ENCODE measurements at regions of chr5 and their contacts with region 1.

Region 1: GRCh38 chr5:42057254-42057690 is 132.2 kb downstream of the FBXO4 start:
- DNase-seq: no peak
- H3K4me3 ChIP-seq: no peak overlapping the region
- H3K27ac ChIP-seq: no peak overlapping the region
- H3K4me1 ChIP-seq: no peaks in the 10 kb centered on the region
- H3K27me3 ChIP-seq: no peaks in the 10 kb centered on the region
- CTCF ChIP-seq: peak; percentile 61 to 82 (median 64)
- POLR2A ChIP-seq: no peak

Region 2: DNA sequence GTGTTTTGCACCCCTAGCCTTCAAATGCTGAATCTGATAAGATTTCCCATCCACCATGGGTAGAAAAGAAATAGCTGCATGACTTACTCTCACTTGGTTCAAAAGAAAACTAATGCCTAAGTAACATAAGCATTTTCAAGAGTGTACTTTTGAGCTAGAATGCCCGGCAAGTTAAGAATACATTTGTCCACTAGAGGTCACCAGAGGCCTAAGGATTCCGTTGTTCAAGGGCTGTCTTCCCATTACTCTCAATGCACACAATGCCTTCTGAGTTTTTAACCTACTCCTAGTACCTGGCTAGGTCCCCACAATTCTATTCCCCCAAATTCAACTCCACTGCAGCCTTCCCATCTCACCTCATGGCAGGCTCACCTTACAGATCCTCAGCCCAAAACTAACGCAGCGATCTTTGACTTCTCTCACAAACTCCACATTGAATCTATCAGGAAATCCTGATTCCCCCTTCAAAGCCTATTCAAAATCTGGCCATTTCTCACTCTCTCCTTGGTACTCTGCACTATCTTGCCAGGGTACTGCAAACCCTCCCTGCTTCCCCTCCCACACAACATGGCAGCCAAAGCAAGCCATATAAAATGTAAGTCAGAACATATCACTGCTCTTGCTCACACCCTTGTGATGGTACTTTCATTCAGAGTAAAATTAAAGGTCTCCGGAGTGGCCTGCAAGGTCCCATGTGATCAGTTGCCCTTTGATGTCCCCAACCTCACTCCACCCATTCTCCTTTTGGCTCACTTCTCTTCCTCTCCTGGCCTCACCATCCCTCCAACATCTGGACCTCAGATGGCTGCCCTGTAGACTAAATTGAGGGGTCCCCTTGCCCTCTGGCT is 200.4 kb before region 1 on chr5:
- intact Hi-C with region 1: loop called (anchors 5 kb)
- DNase-seq: no peak
- H3K4me3 ChIP-seq: no peak overlapping the region
- H3K27ac ChIP-seq: no peak overlapping the region
- H3K4me1 ChIP-seq: peaks cover 0 to 7% (median 0%) of the 10 kb centered on the region in 3 donors
- H3K27me3 ChIP-seq: no peaks in the 10 kb centered on the region
- CTCF ChIP-seq: peak; percentile 49 to 76 (median 65)
- POLR2A ChIP-seq: no peak

Measured in esophagus squamous epithelium (tissue), 5 donors.